ENCODE measurements at regions of chr6 and their contacts with region 1.

Region 1: DNA sequence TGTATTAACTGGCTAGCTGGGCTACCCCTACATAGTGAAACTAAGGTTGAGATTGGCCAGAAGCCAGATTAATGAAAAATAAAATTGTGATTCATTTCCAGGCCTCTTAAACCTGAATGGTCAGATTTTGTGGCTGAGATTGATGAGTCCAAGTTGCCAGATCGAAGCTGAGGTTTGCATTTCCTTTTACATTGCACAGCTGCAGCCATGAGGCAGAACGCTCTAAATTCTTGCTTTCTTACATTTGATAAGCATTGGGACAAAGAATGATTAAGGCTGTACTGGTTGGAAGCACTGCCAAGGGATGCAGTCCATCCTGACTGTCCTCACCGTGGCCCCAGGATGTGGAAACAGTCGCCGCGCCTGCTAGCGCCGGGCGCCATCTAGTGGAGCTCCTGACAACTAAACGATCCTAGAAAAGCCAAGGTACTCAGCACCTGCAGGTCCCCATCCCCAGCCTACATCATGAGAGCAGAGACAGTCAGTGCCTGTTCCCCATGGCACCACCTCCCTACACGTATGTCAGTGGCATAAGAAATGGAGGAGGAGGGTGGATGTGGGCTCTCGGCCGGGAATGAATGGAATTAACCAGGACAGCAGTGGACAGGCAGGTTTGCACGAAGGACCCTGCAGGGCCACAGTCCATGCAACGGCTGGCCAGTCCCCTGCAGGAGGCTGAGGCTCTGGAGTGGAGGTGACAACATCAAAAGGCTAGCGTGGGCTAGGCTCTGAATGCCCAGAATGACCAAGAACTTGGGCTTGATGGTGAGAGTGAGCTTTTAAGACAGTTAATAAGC is 19.0 kb downstream of the PXDC1 start:
- DNase-seq: peak; percentile 74
- CTCF ChIP-seq: peak; percentile 79

Region 2: GRCh38 chr6:3273707-3274521 is 458.6 kb before region 1 on chr6:
- CTCF ChIA-PET with region 1: interaction called, 112 read pairs
- POLR2A ChIA-PET with region 1: no interaction called
- DNase-seq: no peak
- CTCF ChIP-seq: no peak

Region 3: DNA sequence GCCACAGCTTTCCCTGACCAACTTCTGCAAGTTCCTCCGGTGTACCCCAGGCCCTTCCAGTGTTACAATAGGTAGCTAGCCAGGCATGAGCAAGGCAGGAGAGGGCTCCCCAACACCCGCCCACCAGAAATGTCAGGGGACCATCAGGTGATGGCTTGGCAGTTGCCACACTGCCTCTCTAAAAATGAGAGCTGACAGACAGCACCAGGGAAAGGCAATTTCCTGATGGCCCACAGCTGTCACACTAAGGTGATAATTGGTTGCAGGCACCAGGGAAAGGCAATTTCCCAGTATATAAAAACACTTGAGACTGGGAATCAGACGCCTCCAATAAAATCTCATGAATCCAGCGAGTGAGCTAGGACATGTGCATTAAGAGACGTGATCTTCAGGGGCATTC is 30.9 kb before region 1 on chr6:
- CTCF ChIA-PET with region 1: interaction called, 12 read pairs
- POLR2A ChIA-PET with region 1: no interaction called
- DNase-seq: no peak
- CTCF ChIP-seq: no peak

Region 4: DNA sequence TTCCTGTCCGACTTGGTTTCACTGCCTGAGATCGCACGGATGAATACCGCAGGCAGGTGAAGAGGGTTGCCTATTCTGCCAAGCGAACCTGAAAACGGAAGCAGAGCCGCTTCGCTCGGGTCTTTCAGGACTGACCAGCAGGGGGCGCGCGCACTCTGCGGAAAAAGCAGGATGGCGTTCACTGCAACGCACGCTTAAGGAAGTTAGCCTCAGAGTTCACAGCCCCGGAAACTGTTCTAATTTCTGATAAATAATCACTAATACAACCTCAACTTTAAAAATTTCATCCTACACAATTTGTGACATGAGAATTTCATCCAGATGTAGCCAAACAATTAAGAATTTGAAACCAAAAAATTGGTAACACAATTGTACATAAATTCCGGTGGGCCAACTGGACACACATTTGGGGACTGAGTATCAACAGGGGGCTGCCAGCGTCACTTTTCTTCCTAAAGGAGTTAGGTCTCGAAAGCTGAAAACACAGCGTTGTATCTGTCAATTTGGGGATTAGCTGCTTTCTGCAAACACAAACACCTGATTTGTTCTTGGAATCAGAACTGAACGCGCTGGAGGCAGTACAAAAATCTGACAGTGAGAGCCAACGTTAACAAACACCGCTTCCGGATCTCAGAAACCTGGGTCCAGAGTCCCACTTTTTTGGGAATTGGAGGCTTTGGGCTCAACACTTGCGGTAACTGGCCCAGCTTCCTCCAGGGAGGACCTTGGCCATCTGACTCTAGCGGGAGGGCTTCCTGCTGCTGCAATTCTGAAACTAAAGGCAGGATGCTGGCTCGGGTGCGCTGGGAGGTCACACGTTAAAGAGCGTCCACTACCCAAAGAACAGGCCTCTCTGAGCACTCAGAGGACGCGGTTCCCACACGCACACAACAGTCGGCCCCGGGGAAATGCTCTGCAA is 10.1 kb after region 1 on chr6:
- CTCF ChIA-PET with region 1: interaction called, 14 read pairs
- POLR2A ChIA-PET with region 1: no interaction called
- DNase-seq: peak; percentile 85
- CTCF ChIP-seq: peak; percentile 90

Region 5: GRCh38 chr6:3755637-3756545 is 23.3 kb after region 1 on chr6:
- CTCF ChIA-PET with region 1: interaction called, 16 read pairs
- POLR2A ChIA-PET with region 1: no interaction called
- DNase-seq: no peak
- CTCF ChIP-seq: no peak

Region 6: GRCh38 chr6:4114123-4114522 is 381.6 kb after region 1 on chr6:
- CTCF ChIA-PET with region 1: no interaction called
- POLR2A ChIA-PET with region 1: no interaction called
- DNase-seq: no peak
- CTCF ChIP-seq: no peak

Measured in GM10248 (cell line).